CD4-positive, alpha-beta memory T cell (primary cell): ENCODE measurements at regions of chr14 and their contacts with region 1.

Region 1: DNA sequence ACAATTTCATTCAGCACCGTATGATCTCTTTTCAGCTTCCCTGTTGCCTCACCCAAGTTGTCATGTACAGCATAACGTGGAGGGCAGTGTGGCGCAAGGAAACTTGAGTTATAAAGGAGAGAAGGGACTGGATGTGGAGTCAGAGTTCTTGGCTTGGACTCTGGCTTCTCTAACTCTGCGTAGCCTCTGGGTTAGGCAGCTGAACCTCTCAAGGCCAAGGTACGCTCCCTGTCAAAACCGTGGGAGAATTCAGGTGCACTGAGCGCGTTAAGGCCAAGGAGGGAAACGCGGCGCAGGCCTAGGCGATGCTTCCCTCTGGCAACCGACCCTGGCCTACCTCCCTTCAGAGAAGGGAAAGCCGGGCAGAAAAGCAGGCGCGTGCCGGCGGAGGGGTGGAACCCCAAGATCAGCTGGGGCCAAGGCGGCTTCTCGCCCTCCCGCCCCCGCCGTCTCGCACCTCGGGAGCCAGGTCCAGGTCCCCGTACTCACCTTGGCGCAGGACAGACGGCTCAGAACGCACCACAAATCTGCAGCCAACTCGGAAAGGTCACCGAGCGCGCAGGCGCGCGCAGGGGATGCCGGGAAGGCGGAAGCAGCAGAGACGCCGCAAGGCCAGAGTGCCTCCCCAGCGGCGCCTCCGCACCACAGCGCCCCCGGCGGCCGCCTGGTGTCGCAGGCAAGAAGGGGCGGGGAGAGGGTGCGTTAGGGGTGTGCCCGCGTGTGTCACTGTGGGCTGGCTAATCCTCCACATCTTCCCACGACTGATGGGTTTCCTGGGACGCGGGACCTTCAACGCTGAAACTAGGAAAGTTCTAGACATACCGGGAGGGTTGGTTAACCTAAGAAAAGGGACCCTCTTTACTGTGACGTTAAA is 7.0 kb upstream of the TDRD9 start:
- DNase-seq: peak; percentile 92 to 96 (median 94)
- H3K4me3 ChIP-seq: peak overlapping the region; percentile 87 to 96
- H3K4me3 Mint-ChIP-seq: peak overlapping the region; percentile 87 to 95 (median 90)
- H3K27ac ChIP-seq: peak overlapping the region; percentile 83
- H3K27ac Mint-ChIP-seq: peak overlapping the region; percentile 76 to 94 (median 84)
- H3K4me1 ChIP-seq: peaks cover 21% of the 10 kb centered on the region
- H3K4me1 Mint-ChIP-seq: peaks cover 7 to 32% (median 9%) of the 10 kb centered on the region in 4 donors
- H3K27me3 ChIP-seq: no peaks in the 10 kb centered on the region
- H3K27me3 Mint-ChIP-seq: peaks cover 0 to 2% of the 10 kb centered on the region in 2 donors

Region 2: DNA sequence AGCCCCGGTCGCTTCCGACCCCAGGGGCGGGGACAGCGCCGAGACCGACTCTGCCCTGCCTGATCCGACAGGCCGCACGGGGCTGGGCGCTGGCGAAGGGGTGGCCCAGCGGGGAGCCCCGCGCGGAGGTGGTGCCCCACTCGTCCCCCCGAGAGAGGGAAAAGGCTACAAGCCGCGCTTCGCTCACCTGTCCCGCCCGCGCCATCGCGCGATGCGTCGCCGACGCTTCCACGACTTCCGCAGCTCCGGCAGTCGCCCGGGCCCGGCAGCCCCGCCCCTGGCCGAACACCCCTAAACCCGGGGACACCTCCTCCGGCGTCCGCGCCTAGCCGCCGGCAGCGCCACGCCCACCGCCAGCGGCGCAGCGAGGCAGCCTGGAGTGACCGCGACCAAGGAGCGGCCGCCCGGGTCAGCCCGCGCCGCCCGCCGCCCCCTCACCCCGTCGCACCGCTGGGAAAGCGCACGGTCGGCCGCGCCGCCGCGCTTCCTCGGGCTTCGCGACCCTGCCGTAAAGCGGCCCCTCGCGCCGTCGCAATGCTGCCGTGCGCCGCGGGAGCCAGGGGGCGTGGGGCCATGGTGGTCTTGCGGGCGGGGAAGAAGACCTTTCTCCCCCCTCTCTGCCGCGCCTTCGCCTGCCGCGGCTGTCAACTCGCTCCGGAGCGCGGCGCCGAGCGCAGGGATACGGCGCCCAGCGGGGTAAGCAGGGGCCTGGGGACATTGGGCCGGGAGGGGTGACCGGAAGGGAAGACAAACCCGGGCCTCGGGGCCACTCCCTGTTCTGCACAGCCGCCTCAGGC is 358.6 kb before region 1 on chr14 and contains the starts of genes BAG5 and COA8:
- CTCF ChIA-PET with region 1: no interaction called
- POLR2A ChIA-PET with region 1: interaction called, 3 read pairs
- intact Hi-C with region 1: loop called (anchors 5 kb)
- DNase-seq: peak; percentile 88 to 93 (median 89)
- H3K4me3 ChIP-seq: peak within 1 kb of the TSS; percentile 84
- H3K4me3 Mint-ChIP-seq: peak within 1 kb of the TSS; percentile 93 to 98 (median 94)
- H3K27ac ChIP-seq: peak within 1 kb of the TSS; percentile 81
- H3K27ac Mint-ChIP-seq: peak within 1 kb of the TSS; percentile 93 to 98 (median 96)
- H3K4me1 ChIP-seq: peaks cover 56% of the 10 kb centered on the region
- H3K4me1 Mint-ChIP-seq: peaks cover 31 to 74% (median 56%) of the 10 kb centered on the region in 4 donors
- H3K27me3 ChIP-seq: no peaks in the 10 kb centered on the region
- H3K27me3 Mint-ChIP-seq: no peaks in the 10 kb centered on the region
- total RNA-seq, gene BAG5: 37.0 to 37.1 TPM
- total RNA-seq, gene COA8: 26.1 to 29.2 TPM

Region 3: DNA sequence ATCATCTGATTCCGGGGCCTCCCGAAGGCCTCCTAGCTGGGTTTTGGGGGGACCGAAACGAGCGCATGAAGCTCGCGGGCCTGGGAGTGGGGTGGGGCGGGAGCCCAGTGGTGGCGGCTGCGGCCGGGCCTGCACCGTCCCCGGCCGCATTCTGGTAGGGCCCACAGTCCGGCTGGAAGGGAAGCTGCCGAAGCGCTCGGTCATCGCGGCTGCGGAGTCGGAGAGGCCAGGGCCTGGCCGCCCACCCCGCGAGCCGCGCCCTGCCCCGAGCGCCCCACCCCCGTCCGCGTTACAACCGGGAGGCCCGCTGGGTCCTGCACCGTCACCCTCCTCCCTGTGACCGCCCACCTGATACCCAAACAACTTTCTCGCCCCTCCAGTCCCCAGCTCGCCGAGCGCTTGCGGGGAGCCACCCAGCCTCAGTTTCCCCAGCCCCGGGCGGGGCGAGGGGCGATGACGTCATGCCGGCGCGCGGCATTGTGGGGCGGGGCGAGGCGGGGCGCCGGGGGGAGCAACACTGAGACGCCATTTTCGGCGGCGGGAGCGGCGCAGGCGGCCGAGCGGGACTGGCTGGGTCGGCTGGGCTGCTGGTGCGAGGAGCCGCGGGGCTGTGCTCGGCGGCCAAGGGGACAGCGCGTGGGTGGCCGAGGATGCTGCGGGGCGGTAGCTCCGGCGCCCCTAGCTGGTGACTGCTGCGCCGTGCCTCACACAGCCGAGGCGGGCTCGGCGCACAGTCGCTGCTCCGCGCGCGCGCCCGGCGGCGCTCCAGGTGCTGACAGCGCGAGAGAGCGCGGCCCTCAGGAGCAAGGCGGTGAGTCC is 292.3 kb before region 1 on chr14 and contains the start of gene KLC1:
- CTCF ChIA-PET with region 1: no interaction called
- POLR2A ChIA-PET with region 1: no interaction called
- intact Hi-C with region 1: loop called (anchors 1 kb)
- DNase-seq: peak; percentile 75 to 86 (median 80)
- H3K4me3 ChIP-seq: peak within 1 kb of the TSS; percentile 52 to 85
- H3K4me3 Mint-ChIP-seq: peak within 1 kb of the TSS; percentile 85 to 90 (median 87)
- H3K27ac ChIP-seq: peak within 1 kb of the TSS; percentile 89
- H3K27ac Mint-ChIP-seq: peak within 1 kb of the TSS; percentile 81 to 95 (median 92)
- H3K4me1 ChIP-seq: peaks cover 62% of the 10 kb centered on the region
- H3K4me1 Mint-ChIP-seq: peaks cover 22 to 60% (median 37%) of the 10 kb centered on the region in 4 donors
- H3K27me3 ChIP-seq: no peaks in the 10 kb centered on the region
- H3K27me3 Mint-ChIP-seq: no peaks in the 10 kb centered on the region
- total RNA-seq, gene KLC1: 242 to 278 TPM

Region 4: DNA sequence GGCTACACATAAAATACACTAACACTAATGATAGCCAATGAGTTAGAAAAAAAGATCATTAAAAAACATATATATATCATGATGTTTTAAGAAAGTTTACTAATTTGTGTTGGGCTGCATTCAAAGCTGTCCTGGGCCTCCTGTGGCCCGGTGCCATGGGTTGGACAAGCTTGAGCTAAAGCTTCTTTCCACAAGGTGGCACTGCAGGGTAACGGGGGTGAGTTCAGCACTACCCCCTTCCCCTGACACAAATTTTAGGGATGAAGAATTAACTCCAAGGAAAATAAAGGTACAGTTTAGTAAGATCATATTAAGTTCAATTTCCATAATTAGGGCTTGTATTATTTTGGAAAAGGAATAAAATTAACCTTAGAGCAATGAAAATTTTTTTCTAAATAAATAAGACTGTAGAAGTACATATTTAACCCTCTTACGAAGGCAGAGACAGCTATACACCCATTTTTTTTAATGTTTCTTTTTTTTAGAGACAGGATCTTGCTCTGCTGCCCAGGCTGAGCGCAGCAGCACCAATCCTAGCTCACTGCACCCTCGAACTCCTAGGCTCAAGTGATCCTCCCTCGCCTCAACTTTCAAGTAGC is 112.7 kb before region 1 on chr14:
- CTCF ChIA-PET with region 1: interaction called, 265 read pairs
- POLR2A ChIA-PET with region 1: no interaction called
- intact Hi-C with region 1: no loop called
- DNase-seq: peak; percentile 55 to 67 (median 61)
- H3K4me3 ChIP-seq: no peak overlapping the region
- H3K4me3 Mint-ChIP-seq: no peak overlapping the region
- H3K27ac ChIP-seq: no peak overlapping the region
- H3K27ac Mint-ChIP-seq: no peak overlapping the region
- H3K4me1 ChIP-seq: no peaks in the 10 kb centered on the region
- H3K4me1 Mint-ChIP-seq: peaks cover 5 to 18% (median 8%) of the 10 kb centered on the region in 4 donors
- H3K27me3 ChIP-seq: no peaks in the 10 kb centered on the region
- H3K27me3 Mint-ChIP-seq: no peaks in the 10 kb centered on the region

Region 5: DNA sequence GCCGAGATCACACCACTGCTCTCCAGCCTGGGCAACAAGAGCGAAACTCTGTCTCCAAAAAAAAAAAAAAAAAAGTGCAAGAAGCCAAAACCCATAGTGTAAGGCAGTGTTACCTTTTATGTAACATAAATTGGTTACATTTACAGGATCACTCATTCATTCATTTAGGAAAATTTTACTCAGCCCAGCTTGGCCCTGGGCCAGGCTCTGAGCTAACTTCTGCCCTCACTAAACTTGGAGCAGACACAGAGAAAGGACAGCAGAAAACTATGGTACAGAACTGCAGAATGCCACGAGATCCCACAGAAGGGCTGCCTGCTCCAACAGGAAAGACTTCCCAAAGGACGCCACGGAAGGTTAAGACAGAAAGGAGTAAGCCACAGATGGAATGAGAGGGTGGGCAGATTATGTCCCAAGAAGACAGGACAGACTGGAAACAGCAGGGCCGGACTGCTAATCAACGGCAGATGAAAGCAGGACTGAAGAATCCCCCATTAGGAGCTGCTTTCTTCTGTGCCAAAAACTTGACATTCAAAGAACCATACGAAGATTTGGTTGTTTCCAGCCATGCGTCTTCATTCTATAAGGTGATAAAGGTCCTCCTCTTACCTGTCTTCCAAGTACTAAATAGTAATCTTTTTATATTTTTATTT is 92.8 kb before region 1 on chr14:
- CTCF ChIA-PET with region 1: no interaction called
- POLR2A ChIA-PET with region 1: no interaction called
- intact Hi-C with region 1: no loop called
- DNase-seq: no peak
- H3K4me3 ChIP-seq: no peak overlapping the region
- H3K4me3 Mint-ChIP-seq: no peak overlapping the region
- H3K27ac ChIP-seq: no peak overlapping the region
- H3K27ac Mint-ChIP-seq: no peak overlapping the region
- H3K4me1 ChIP-seq: no peaks in the 10 kb centered on the region
- H3K4me1 Mint-ChIP-seq: peaks cover 6 to 20% (median 10%) of the 10 kb centered on the region in 4 donors
- H3K27me3 ChIP-seq: no peaks in the 10 kb centered on the region
- H3K27me3 Mint-ChIP-seq: no peaks in the 10 kb centered on the region

Region 6: DNA sequence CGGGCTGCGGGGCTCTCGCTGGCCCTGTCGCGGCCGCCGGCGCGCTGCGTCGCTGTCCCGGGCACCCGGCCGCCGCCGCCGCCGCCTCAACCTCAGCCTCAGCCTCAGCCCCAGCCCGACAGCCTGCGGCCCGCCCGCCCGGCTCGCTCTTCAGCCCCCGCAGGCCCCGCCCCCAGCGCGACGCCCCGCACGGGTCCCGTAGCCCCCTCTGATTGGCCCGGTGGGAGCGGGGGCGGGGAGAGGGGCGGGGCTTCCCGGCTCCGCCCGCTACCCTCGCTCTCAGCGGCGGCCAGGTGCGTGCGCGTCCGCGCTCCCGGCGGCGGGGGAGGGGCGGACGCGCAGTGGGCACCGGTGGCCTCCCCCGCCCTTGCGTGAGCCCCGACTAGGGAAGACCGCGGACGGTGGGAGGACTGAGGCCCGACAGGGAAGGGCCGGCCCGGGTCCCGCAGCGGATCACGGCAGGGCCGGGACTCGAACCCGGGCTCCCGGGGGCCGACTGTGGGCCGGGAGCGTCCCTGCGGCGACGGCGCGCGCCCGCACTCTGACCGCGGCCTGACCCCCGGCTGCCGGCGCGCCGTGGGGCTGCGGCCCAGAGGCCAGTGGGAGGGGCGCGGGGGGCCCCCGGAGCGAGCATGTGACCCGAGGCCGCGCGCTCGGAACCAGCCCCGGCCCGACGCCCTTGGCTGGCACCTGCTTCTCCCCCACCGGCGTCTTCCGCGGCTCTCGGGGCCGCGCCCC is 73.6 kb before region 1 on chr14 and contains the start of gene PPP1R13B:
- CTCF ChIA-PET with region 1: no interaction called
- POLR2A ChIA-PET with region 1: no interaction called
- intact Hi-C with region 1: loop called (anchors 1 kb)
- DNase-seq: peak; percentile 90 to 93 (median 92)
- H3K4me3 ChIP-seq: peak within 1 kb of the TSS; percentile 1 to 55
- H3K4me3 Mint-ChIP-seq: peak within 1 kb of the TSS; percentile 86 to 96 (median 92)
- H3K27ac ChIP-seq: peak within 1 kb of the TSS; percentile 26
- H3K27ac Mint-ChIP-seq: peak within 1 kb of the TSS; percentile 43 to 93 (median 85)
- H3K4me1 ChIP-seq: peaks cover 12% of the 10 kb centered on the region
- H3K4me1 Mint-ChIP-seq: peaks cover 9 to 26% (median 16%) of the 10 kb centered on the region in 4 donors
- H3K27me3 ChIP-seq: no peaks in the 10 kb centered on the region
- H3K27me3 Mint-ChIP-seq: no peaks in the 10 kb centered on the region
- total RNA-seq, gene PPP1R13B: 23.3 to 30.5 TPM

Region 7: GRCh38 chr14:103871596-103872480 is 49.4 kb before region 1 on chr14:
- CTCF ChIA-PET with region 1: no interaction called
- POLR2A ChIA-PET with region 1: no interaction called
- intact Hi-C with region 1: loop called (anchors 1 kb)
- DNase-seq: peak; percentile 59 to 70 (median 62)
- H3K4me3 ChIP-seq: peak overlapping the region; percentile 34 to 56
- H3K4me3 Mint-ChIP-seq: peak overlapping the region; percentile 81 to 88 (median 84)
- H3K27ac ChIP-seq: peak overlapping the region; percentile 56
- H3K27ac Mint-ChIP-seq: peak overlapping the region; percentile 30 to 90 (median 78)
- H3K4me1 ChIP-seq: peaks cover 12% of the 10 kb centered on the region
- H3K4me1 Mint-ChIP-seq: peaks cover 6 to 13% (median 10%) of the 10 kb centered on the region in 4 donors
- H3K27me3 ChIP-seq: no peaks in the 10 kb centered on the region
- H3K27me3 Mint-ChIP-seq: peaks cover 0 to 2% of the 10 kb centered on the region in 2 donors

Region 8: GRCh38 chr14:103910262-103910935 is 10.8 kb before region 1 on chr14:
- CTCF ChIA-PET with region 1: interaction called, 17 read pairs
- POLR2A ChIA-PET with region 1: no interaction called
- intact Hi-C with region 1: no loop called
- DNase-seq: peak; percentile 61 to 70 (median 65)
- H3K4me3 ChIP-seq: peak overlapping the region in 1 of 2 donors; percentile 15
- H3K4me3 Mint-ChIP-seq: peak overlapping the region; percentile 47 to 80 (median 71)
- H3K27ac ChIP-seq: peak overlapping the region; percentile 4
- H3K27ac Mint-ChIP-seq: peak overlapping the region in 6 of 7 donors; percentile 43 to 79 (median 72)
- H3K4me1 ChIP-seq: peaks cover 8% of the 10 kb centered on the region
- H3K4me1 Mint-ChIP-seq: peaks cover 6 to 20% (median 10%) of the 10 kb centered on the region in 4 donors
- H3K27me3 ChIP-seq: no peaks in the 10 kb centered on the region
- H3K27me3 Mint-ChIP-seq: no peaks in the 10 kb centered on the region